ENCODE measurements at regions of chr16 and their contacts with region 1.

Region 1: GRCh38 chr16:81873843-81874752 is 95.0 kb downstream of the PLCG2 start:
- DNase-seq: peak; percentile 58
- ATAC-seq: peak; percentile 76
- H3K4me3 ChIP-seq: no peak overlapping the region
- H3K27ac ChIP-seq: no peak overlapping the region
- H3K4me1 ChIP-seq: no peaks in the 10 kb centered on the region
- H3K27me3 ChIP-seq: no peaks in the 10 kb centered on the region
- CTCF ChIP-seq: peak; percentile 66

Region 2: GRCh38 chr16:81838794-81839193 is 35.3 kb before region 1 on chr16:
- CTCF ChIA-PET with region 1: no interaction called
- POLR2A ChIA-PET with region 1: no interaction called
- intact Hi-C with region 1: loop called (anchors 1 kb)
- DNase-seq: peak; percentile 63
- ATAC-seq: peak; percentile 84
- H3K4me3 ChIP-seq: no peak overlapping the region
- H3K27ac ChIP-seq: no peak overlapping the region
- H3K4me1 ChIP-seq: peaks cover 5% of the 10 kb centered on the region
- H3K27me3 ChIP-seq: no peaks in the 10 kb centered on the region
- CTCF ChIP-seq: no peak